ENCODE measurements at regions of chr22 and their contacts with region 1.

Region 1: GRCh38 chr22:19447388-19448075 is at the start of gene C22orf39:
- DNase-seq: peak; percentile 93 to 94
- H3K4me3 ChIP-seq: peak within 1 kb of the TSS; percentile 76
- H3K4me3 Mint-ChIP-seq: peak within 1 kb of the TSS; percentile 81
- H3K27ac Mint-ChIP-seq: peak within 1 kb of the TSS; percentile 76
- H3K4me1 ChIP-seq: no peaks in the 10 kb centered on the region
- H3K4me1 Mint-ChIP-seq: peaks cover 17% of the 10 kb centered on the region
- H3K27me3 ChIP-seq: no peaks in the 10 kb centered on the region
- H3K27me3 Mint-ChIP-seq: no peaks in the 10 kb centered on the region
- CTCF ChIP-seq: no peak
- total RNA-seq, gene C22orf39: 30.7 and 36.1 TPM in 2 replicates

Region 2: GRCh38 chr22:19432133-19432851 is 15.2 kb before region 1 on chr22 and contains the start of gene MRPL40:
- CTCF ChIA-PET with region 1: no interaction called
- POLR2A ChIA-PET with region 1: interaction called, 8 read pairs
- intact Hi-C with region 1: loop called (anchors 2 kb)
- DNase-seq: peak; percentile 93 to 95
- H3K4me3 ChIP-seq: peak within 1 kb of the TSS; percentile 64
- H3K4me3 Mint-ChIP-seq: peak within 1 kb of the TSS; percentile 80
- H3K27ac Mint-ChIP-seq: peak within 1 kb of the TSS; percentile 85
- H3K4me1 ChIP-seq: peaks cover 9% of the 10 kb centered on the region; the same call in 1 of the 2 replicates
- H3K4me1 Mint-ChIP-seq: peaks cover 8% of the 10 kb centered on the region
- H3K27me3 ChIP-seq: no peaks in the 10 kb centered on the region
- H3K27me3 Mint-ChIP-seq: no peaks in the 10 kb centered on the region
- CTCF ChIP-seq: no peak
- total RNA-seq, gene MRPL40: 42.6 and 42.7 TPM in 2 replicates

Region 3: DNA sequence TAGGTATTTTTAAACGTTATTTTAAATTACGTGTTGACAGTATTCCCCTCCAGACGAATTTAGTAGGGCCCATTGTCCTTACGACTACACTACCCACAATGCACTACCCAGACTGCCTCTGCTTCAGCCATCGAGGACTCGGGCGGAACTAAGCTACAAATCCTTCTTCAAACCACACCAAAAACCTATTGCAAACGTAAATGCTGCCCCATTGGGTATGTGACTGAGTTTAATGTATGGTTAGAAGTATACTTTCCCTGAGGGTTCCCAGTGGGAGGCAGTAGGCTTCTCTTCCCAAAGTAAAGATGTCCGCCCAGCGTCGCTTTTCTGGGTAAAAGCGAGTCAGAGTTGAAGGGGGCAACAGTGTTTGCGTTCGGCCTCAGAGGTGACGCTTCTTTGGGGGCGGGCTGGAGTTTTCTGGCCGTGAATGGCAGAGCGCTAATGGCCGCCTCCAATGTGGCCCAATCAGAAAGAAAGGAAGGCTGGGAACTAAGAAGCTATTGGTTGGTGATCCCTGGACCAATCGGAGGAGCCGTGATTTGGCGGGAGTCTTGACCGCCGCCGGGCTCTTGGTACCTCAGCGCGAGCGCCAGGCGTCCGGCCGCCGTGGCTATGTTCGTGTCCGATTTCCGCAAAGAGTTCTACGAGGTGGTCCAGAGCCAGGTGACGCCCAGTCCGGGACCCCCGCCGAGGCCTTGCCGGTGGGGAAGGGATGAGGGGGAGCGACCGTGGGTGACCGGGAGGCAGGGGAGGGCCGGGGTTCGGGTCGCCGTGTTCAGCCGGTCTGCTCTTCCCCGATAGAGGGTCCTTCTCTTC is 32.0 kb after region 1 on chr22 and contains the start of gene CDC45:
- CTCF ChIA-PET with region 1: no interaction called
- POLR2A ChIA-PET with region 1: interaction called, 10 read pairs
- intact Hi-C with region 1: loop called (anchors 1 kb)
- DNase-seq: peak; percentile 95 to 97
- H3K4me3 ChIP-seq: peak within 1 kb of the TSS; percentile 96
- H3K4me3 Mint-ChIP-seq: peak within 1 kb of the TSS; percentile 95
- H3K27ac Mint-ChIP-seq: peak within 1 kb of the TSS; percentile 100
- H3K4me1 ChIP-seq: peaks cover 6% of the 10 kb centered on the region; the same call in 1 of the 2 replicates
- H3K4me1 Mint-ChIP-seq: peaks cover 23% of the 10 kb centered on the region
- H3K27me3 ChIP-seq: no peaks in the 10 kb centered on the region
- H3K27me3 Mint-ChIP-seq: no peaks in the 10 kb centered on the region
- CTCF ChIP-seq: no peak
- total RNA-seq, gene CDC45: 41.7 and 44.6 TPM in 2 replicates

Region 4: GRCh38 chr22:19607192-19608002 is 159.9 kb after region 1 on chr22:
- CTCF ChIA-PET with region 1: no interaction called
- POLR2A ChIA-PET with region 1: no interaction called
- intact Hi-C with region 1: no loop called
- DNase-seq: no peak
- H3K4me3 ChIP-seq: no peak overlapping the region
- H3K4me3 Mint-ChIP-seq: no peak overlapping the region
- H3K27ac Mint-ChIP-seq: no peak overlapping the region
- H3K4me1 ChIP-seq: peaks cover 6% of the 10 kb centered on the region
- H3K4me1 Mint-ChIP-seq: no peaks in the 10 kb centered on the region
- H3K27me3 ChIP-seq: no peaks in the 10 kb centered on the region; the same call in 1 of the 2 replicates
- H3K27me3 Mint-ChIP-seq: peaks cover 7% of the 10 kb centered on the region
- CTCF ChIP-seq: no peak